ENCODE measurements at regions of chr12 and their contacts with region 1.

Region 1: GRCh38 chr12:9732921-9733461 is at the start of gene CLECL1:
- DNase-seq: no peak
- H3K4me3 Mint-ChIP-seq: peak within 1 kb of the TSS; percentile 83
- H3K27ac Mint-ChIP-seq: peak within 1 kb of the TSS; percentile 93
- H3K4me1 Mint-ChIP-seq: peaks cover 50% of the 10 kb centered on the region
- H3K27me3 Mint-ChIP-seq: no peaks in the 10 kb centered on the region
- total RNA-seq, gene CLECL1: 6.5 to 7.4 TPM

Region 2: GRCh38 chr12:9364224-9365176 is 368.5 kb before region 1 on chr12:
- CTCF ChIA-PET with region 1: no interaction called
- POLR2A ChIA-PET with region 1: no interaction called
- intact Hi-C with region 1: loop called (anchors 10 kb)
- DNase-seq: peak; percentile 73
- H3K4me3 Mint-ChIP-seq: peak overlapping the region; percentile 6
- H3K27ac Mint-ChIP-seq: peak overlapping the region; percentile 33
- H3K4me1 Mint-ChIP-seq: peaks cover 42% of the 10 kb centered on the region
- H3K27me3 Mint-ChIP-seq: peaks cover 25% of the 10 kb centered on the region

Region 3: GRCh38 chr12:9509464-9510166 is 223.4 kb before region 1 on chr12:
- CTCF ChIA-PET with region 1: no interaction called
- POLR2A ChIA-PET with region 1: no interaction called
- intact Hi-C with region 1: no loop called
- DNase-seq: no peak
- H3K4me3 Mint-ChIP-seq: no peak overlapping the region
- H3K27ac Mint-ChIP-seq: no peak overlapping the region
- H3K4me1 Mint-ChIP-seq: no peaks in the 10 kb centered on the region
- H3K27me3 Mint-ChIP-seq: no peaks in the 10 kb centered on the region

Region 4: GRCh38 chr12:9640024-9640423 is 93.0 kb before region 1 on chr12:
- CTCF ChIA-PET with region 1: no interaction called
- POLR2A ChIA-PET with region 1: no interaction called
- intact Hi-C with region 1: no loop called
- DNase-seq: no peak
- H3K4me3 Mint-ChIP-seq: no peak overlapping the region
- H3K27ac Mint-ChIP-seq: no peak overlapping the region
- H3K4me1 Mint-ChIP-seq: peaks cover 63% of the 10 kb centered on the region
- H3K27me3 Mint-ChIP-seq: no peaks in the 10 kb centered on the region

Region 5: GRCh38 chr12:9667403-9668160 is 65.4 kb before region 1 on chr12:
- CTCF ChIA-PET with region 1: no interaction called
- POLR2A ChIA-PET with region 1: interaction called, 13 read pairs
- intact Hi-C with region 1: loop called (anchors 1 kb)
- DNase-seq: no peak
- H3K4me3 Mint-ChIP-seq: peak overlapping the region; percentile 93
- H3K27ac Mint-ChIP-seq: peak overlapping the region; percentile 98
- H3K4me1 Mint-ChIP-seq: peaks cover 56% of the 10 kb centered on the region
- H3K27me3 Mint-ChIP-seq: no peaks in the 10 kb centered on the region

Region 6: DNA sequence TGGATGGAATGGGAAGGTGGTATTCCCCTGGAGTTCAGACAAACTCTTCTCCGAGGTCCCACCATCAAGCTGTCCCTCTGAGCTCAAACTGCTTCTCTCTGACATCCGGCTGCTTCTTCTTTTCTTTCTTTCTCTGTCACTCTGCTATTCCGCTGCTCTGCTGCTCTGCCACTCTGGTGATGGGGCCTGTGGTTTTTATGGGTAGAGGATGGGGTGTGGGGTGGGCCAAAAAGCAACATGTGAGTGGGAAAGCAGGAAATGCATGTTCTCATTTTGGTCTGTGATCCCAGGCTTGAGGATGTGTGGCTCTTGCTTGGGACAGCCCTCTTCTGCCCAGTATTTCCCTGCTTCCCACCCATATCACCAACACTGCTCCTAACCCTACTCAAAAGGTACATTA is 30.7 kb before region 1 on chr12:
- CTCF ChIA-PET with region 1: interaction called, 5 read pairs
- POLR2A ChIA-PET with region 1: interaction called, 4 read pairs
- intact Hi-C with region 1: loop called (anchors 2 kb)
- DNase-seq: peak; percentile 78
- H3K4me3 Mint-ChIP-seq: peak overlapping the region; percentile 66
- H3K27ac Mint-ChIP-seq: peak overlapping the region; percentile 87
- H3K4me1 Mint-ChIP-seq: peaks cover 74% of the 10 kb centered on the region
- H3K27me3 Mint-ChIP-seq: no peaks in the 10 kb centered on the region

Region 7: DNA sequence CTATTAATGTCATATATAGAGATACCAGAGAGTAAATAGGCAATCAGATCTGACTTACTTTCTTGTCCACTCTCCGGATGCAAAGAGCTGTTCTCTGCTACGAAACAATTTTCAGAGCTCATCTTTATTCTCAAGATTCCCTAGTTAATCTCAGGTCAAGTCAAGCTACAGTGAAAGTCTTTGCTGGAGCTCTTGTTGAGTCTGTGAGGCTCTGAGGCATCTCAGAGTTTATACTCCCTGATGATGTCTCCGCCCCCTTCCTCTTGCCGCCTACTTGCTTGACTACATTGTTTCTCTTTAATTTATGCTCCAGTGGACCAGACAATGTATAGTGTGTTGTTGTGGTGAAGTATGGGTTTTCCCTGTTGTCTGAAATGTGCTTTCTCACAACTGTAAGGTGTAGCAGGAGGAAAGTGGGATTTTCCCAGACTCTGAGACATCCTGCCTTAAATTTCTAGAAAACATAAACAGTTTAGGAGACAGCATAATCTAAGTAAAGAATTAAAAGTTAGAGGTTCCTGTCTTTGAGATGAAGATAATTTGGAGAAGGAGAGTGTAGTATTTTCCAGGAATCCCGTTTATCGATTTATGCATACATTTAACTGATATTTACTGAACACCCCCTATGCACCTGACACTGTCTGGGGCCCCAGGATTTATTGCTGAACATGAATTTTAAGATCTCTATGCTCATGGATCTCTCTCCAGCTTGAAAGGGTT is 27.9 kb after region 1 on chr12 and contains the start of gene CD69:
- CTCF ChIA-PET with region 1: no interaction called
- POLR2A ChIA-PET with region 1: interaction called, 6 read pairs
- intact Hi-C with region 1: loop called (anchors 2 kb)
- DNase-seq: peak; percentile 90
- H3K4me3 Mint-ChIP-seq: peak within 1 kb of the TSS; percentile 100
- H3K27ac Mint-ChIP-seq: peak within 1 kb of the TSS; percentile 99
- H3K4me1 Mint-ChIP-seq: peaks cover 52% of the 10 kb centered on the region
- H3K27me3 Mint-ChIP-seq: peaks cover 2% of the 10 kb centered on the region
- total RNA-seq, gene CD69: 118 to 120 TPM

Region 8: GRCh38 chr12:9776778-9777177 is 43.8 kb after region 1 on chr12:
- CTCF ChIA-PET with region 1: no interaction called
- POLR2A ChIA-PET with region 1: no interaction called
- intact Hi-C with region 1: no loop called
- DNase-seq: no peak
- H3K4me3 Mint-ChIP-seq: no peak overlapping the region
- H3K27ac Mint-ChIP-seq: peak overlapping the region; percentile 53
- H3K4me1 Mint-ChIP-seq: peaks cover 94% of the 10 kb centered on the region
- H3K27me3 Mint-ChIP-seq: no peaks in the 10 kb centered on the region

Region 9: GRCh38 chr12:10749700-10750384 is 1016.9 kb after region 1 on chr12:
- CTCF ChIA-PET with region 1: no interaction called
- POLR2A ChIA-PET with region 1: no interaction called
- intact Hi-C with region 1: no loop called
- DNase-seq: peak; percentile 78
- H3K4me3 Mint-ChIP-seq: peak overlapping the region; percentile 40
- H3K27ac Mint-ChIP-seq: peak overlapping the region; percentile 1
- H3K4me1 Mint-ChIP-seq: peaks cover 8% of the 10 kb centered on the region
- H3K27me3 Mint-ChIP-seq: peaks cover 38% of the 10 kb centered on the region